ENCODE measurements at regions of chr7 and their contacts with region 1.

Region 1: DNA sequence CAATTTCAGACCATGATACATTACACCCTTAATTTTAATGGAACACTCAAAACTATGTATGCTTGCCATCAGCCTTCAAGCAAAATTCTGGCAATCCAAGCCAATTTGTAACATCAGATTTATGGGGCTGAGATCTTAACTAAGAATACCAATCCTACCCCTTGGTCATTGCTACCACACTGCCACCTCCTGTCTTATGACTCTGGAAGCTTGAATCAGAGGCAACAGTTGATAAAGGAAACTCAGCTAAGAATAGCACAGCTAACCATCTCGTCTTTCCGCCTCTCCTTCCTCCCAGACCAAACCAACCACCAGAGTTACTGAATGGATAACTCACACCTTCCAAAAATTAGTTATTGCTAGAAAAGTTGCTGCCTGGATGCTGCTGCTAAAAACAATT is 7.4 kb downstream of the IGF2BP3 start:
- DNase-seq: peak; percentile 22
- H3K4me3 Mint-ChIP-seq: no peak overlapping the region
- H3K27ac Mint-ChIP-seq: no peak overlapping the region
- H3K4me1 Mint-ChIP-seq: peaks cover 24% of the 10 kb centered on the region
- H3K27me3 Mint-ChIP-seq: peaks cover 73% of the 10 kb centered on the region

Region 2: DNA sequence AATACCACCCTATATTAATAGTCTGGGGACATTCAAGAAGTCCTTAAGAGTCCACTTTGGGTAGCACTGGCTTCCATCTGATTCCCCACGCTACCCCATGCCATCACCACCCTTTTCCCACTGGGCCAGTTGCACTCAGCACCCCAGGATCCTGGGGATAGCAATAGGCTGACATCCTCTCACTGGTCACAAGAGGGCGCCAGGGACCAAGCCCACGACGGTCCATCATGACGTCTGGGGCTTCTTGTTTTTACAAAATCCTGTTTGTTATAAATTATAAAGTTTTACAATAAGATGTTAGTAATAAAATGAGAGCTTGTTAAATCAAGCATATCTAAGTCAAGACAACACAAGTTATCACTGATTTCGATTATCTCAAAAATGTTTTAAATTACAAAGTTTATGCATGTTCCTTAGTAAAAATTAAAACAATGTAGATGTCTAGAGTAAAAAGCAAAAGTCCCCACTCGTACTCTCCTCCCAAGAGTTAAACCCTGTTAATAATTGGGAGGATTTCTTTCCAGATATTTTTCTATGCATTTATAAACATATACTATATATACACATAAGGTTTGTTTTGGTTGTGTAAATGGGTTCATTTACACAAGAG is 200.9 kb before region 1 on chr7:
- CTCF ChIA-PET with region 1: interaction called, 10 read pairs
- POLR2A ChIA-PET with region 1: no interaction called
- DNase-seq: peak; percentile 65
- H3K4me3 Mint-ChIP-seq: no peak overlapping the region
- H3K27ac Mint-ChIP-seq: no peak overlapping the region
- H3K4me1 Mint-ChIP-seq: peaks cover 5% of the 10 kb centered on the region
- H3K27me3 Mint-ChIP-seq: peaks cover 12% of the 10 kb centered on the region

Region 3: DNA sequence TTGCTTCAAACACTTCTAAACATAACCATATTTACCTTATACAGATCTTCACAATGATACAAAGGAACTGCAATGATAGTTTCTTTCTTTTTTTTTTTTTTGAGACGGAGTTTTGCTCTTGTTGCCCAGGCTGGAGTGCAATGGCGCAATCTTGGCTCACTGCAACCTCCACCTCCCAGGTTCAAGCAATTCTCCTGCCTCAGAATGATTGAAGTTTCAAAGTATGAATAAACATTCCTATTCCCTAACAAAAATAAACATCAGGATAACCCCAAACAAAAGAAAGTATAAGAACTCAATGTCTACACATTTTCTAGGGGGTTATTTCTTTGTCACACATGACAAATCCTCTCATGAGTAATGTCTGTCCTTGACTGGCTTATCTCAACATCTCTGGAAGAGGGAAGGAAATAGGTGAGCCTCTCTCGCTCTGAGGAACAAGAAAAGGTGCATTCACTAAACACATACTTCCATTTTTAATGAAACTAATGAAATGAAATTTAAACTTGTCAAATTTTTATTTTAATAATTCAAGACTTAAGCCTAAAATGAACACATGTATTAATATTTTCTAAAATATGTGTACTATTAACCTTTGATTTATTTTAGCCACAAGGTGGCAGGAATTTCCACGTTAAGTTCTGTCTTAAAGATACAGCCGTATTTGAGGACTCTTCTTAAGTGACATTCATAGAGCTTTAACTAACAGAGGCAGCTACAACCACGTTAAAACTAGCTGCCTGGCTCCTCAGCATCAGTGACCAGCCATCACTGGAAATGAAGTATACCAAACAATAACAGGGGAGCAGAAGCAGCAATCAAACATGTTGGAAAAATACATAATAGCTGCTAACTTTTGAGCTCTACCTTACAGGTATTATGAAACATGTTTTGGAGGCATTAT is 105.4 kb before region 1 on chr7:
- CTCF ChIA-PET with region 1: interaction called, 11 read pairs
- POLR2A ChIA-PET with region 1: no interaction called
- DNase-seq: no peak
- H3K4me3 Mint-ChIP-seq: no peak overlapping the region
- H3K27ac Mint-ChIP-seq: peak overlapping the region; percentile 42
- H3K4me1 Mint-ChIP-seq: peaks cover 28% of the 10 kb centered on the region
- H3K27me3 Mint-ChIP-seq: peaks cover 28% of the 10 kb centered on the region

Measured in activated CD4-positive, alpha-beta memory T cell treated with anti-CD3 and anti-CD28 coated beads, Interleukin-2, amount 10 ng/mL, durations not matched to agents 7 days and 5 days (primary cell).